ENCODE measurements at regions of chr1 and their contacts with region 1.

Region 1: GRCh38 chr1:225700164-225700740 is 47.3 kb upstream of the ENAH start:
- DNase-seq: peak; percentile 92
- H3K4me3 ChIP-seq: peak overlapping the region; percentile 23
- H3K27ac ChIP-seq: peak overlapping the region; percentile 97
- H3K27me3 ChIP-seq: no peaks in the 10 kb centered on the region
- CTCF ChIP-seq: no peak

Region 2: GRCh38 chr1:225464851-225465811 is 235.1 kb before region 1 on chr1:
- CTCF ChIA-PET with region 1: interaction called, 11 read pairs
- POLR2A ChIA-PET with region 1: no interaction called
- DNase-seq: no peak
- H3K4me3 ChIP-seq: no peak overlapping the region
- H3K27ac ChIP-seq: no peak overlapping the region
- H3K27me3 ChIP-seq: no peaks in the 10 kb centered on the region
- CTCF ChIP-seq: no peak

Region 3: GRCh38 chr1:225670806-225671733 is 29.2 kb before region 1 on chr1:
- CTCF ChIA-PET with region 1: no interaction called
- POLR2A ChIA-PET with region 1: no interaction called
- DNase-seq: no peak
- H3K4me3 ChIP-seq: no peak overlapping the region
- H3K27ac ChIP-seq: no peak overlapping the region
- H3K27me3 ChIP-seq: no peaks in the 10 kb centered on the region
- CTCF ChIP-seq: no peak

Region 4: DNA sequence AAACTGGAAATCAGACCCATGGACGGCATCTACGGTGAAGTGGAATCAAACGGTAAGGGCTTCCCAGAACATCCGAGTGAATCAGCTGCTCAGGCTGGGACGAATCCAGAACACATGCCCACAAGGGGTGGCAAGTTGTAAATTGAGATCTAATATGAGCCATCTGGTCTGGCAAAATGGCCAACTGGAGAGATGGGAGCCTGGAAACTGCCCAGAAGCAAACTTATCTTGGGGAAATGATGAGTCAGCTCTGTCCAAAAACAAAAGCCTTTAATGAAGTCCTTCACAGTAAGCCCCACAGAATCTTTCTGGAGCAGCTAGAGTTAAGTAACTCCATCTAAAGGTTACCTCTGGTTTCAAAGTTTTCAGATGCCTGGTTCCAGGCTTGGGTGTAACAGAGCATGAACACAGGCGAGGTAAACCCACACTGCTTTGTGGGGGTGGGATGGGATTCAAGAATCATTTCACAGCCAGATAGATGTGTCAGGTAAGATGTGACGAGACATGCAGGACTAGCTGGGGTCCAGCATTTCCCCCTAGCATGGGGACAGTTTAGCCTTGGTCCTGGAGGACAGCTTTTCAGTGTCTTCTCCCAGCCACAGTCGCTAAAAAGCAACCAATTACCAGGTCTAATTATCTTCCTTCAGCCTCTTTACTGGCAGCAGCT is 66.8 kb after region 1 on chr1:
- CTCF ChIA-PET with region 1: interaction called, 5 read pairs
- POLR2A ChIA-PET with region 1: interaction called, 15 read pairs
- DNase-seq: peak; percentile 74
- H3K4me3 ChIP-seq: 0 out of 2 replicates have a peak overlapping the region, but pooled peaks have one; percentile 4
- H3K27ac ChIP-seq: peak overlapping the region; percentile 89
- H3K27me3 ChIP-seq: no peaks in the 10 kb centered on the region
- CTCF ChIP-seq: no peak